ENCODE measurements at regions of chr16 and their contacts with region 1.

Region 1: DNA sequence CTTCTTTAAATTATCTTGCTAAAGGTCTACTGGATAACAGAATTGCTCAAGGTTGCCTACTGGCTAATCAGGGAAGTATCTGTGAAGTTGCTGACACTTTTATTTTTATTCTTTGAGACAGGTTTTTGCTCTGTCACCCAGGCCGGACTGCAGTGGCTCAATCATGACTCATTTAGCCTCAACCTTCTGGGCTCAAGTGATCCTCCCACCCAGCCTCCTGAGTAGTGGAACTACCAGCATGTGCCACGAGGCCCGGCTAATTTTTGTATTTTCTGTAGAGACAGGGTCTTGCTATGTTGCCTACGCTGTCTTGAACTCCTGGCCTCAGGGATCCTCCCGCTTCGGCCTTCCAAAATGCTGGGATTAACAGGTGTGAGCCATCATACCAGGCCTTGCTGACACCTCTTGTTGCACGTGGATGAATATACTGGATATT is 43.1 kb downstream of the GLG1 start:
- DNase-seq: peak in 1 of 2 donors; percentile 20
- ATAC-seq: peak; percentile 56 to 68 (median 68)
- H3K4me3 ChIP-seq: no peak overlapping the region
- H3K4me3 Mint-ChIP-seq: no peak overlapping the region
- H3K27ac ChIP-seq: no peak overlapping the region
- H3K27ac Mint-ChIP-seq: peak overlapping the region; percentile 77 to 85
- H3K4me1 ChIP-seq: peaks cover 28% of the 10 kb centered on the region
- H3K4me1 Mint-ChIP-seq: peaks cover 85 to 88% of the 10 kb centered on the region in 2 donors
- H3K27me3 ChIP-seq: no peaks in the 10 kb centered on the region
- H3K27me3 Mint-ChIP-seq: no peaks in the 10 kb centered on the region
- CTCF ChIP-seq: no peak

Region 2: DNA sequence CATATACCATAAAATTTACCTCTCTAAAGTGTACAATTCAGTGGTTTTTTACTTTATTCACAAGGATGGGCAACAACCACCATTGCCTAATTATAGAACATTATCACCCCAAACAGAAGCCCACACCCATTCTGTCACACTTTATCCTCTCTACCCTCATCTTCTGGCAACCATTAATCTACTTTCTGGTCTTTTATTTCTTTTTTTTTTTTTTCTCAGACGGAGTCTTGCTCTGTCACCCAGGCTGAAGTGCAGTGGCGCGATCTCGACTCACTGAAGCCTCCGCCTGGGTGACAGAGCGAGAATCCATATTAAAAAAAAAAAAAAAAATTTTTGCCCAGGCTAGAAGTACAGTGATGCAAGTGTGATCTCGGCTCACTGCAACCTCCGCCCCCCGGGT is 51.9 kb before region 1 on chr16:
- intact Hi-C with region 1: loop called (anchors 10 kb)
- DNase-seq: no peak
- ATAC-seq: peak in 2 of 3 donors; percentile 24 to 40
- H3K4me3 ChIP-seq: no peak overlapping the region
- H3K4me3 Mint-ChIP-seq: no peak overlapping the region
- H3K27ac ChIP-seq: no peak overlapping the region
- H3K27ac Mint-ChIP-seq: peak overlapping the region in 1 of 2 donors; percentile 20
- H3K4me1 ChIP-seq: no peaks in the 10 kb centered on the region
- H3K4me1 Mint-ChIP-seq: peaks cover 63 to 65% of the 10 kb centered on the region in 2 donors
- H3K27me3 ChIP-seq: no peaks in the 10 kb centered on the region
- H3K27me3 Mint-ChIP-seq: no peaks in the 10 kb centered on the region
- CTCF ChIP-seq: no peak

Region 3: GRCh38 chr16:74580833-74581232 is 17.0 kb after region 1 on chr16:
- intact Hi-C with region 1: no loop called
- DNase-seq: no peak
- ATAC-seq: peak in 2 of 3 donors; percentile 61 to 62
- H3K4me3 ChIP-seq: no peak overlapping the region
- H3K4me3 Mint-ChIP-seq: peak overlapping the region; percentile 25
- H3K27ac ChIP-seq: no peak overlapping the region
- H3K27ac Mint-ChIP-seq: peak overlapping the region; percentile 65 to 83
- H3K4me1 ChIP-seq: peaks cover 8% of the 10 kb centered on the region
- H3K4me1 Mint-ChIP-seq: peaks cover 57 to 79% of the 10 kb centered on the region in 2 donors
- H3K27me3 ChIP-seq: no peaks in the 10 kb centered on the region
- H3K27me3 Mint-ChIP-seq: no peaks in the 10 kb centered on the region
- CTCF ChIP-seq: no peak

Region 4: GRCh38 chr16:74606521-74607310 is 42.9 kb after region 1 on chr16 and contains the start of gene GLG1:
- intact Hi-C with region 1: loop called (anchors 1 kb)
- DNase-seq: peak; percentile 93 to 96
- ATAC-seq: peak; percentile 95 to 99 (median 96)
- H3K4me3 ChIP-seq: peak within 1 kb of the TSS; percentile 99
- H3K4me3 Mint-ChIP-seq: peak within 1 kb of the TSS; percentile 95
- H3K27ac ChIP-seq: peak within 1 kb of the TSS; percentile 95
- H3K27ac Mint-ChIP-seq: peak within 1 kb of the TSS; percentile 94 to 95
- H3K4me1 ChIP-seq: peaks cover 31% of the 10 kb centered on the region
- H3K4me1 Mint-ChIP-seq: peaks cover 40 to 48% of the 10 kb centered on the region in 2 donors
- H3K27me3 ChIP-seq: no peaks in the 10 kb centered on the region
- H3K27me3 Mint-ChIP-seq: no peaks in the 10 kb centered on the region
- CTCF ChIP-seq: no peak
- total RNA-seq, gene GLG1: 184 to 225 (median 188) TPM

Region 5: GRCh38 chr16:74793571-74793970 is 229.7 kb after region 1 on chr16:
- intact Hi-C with region 1: no loop called
- DNase-seq: no peak
- ATAC-seq: no peak
- H3K4me3 ChIP-seq: no peak overlapping the region
- H3K4me3 Mint-ChIP-seq: no peak overlapping the region
- H3K27ac ChIP-seq: no peak overlapping the region
- H3K27ac Mint-ChIP-seq: no peak overlapping the region
- H3K4me1 ChIP-seq: no peaks in the 10 kb centered on the region
- H3K4me1 Mint-ChIP-seq: no peaks in the 10 kb centered on the region
- H3K27me3 ChIP-seq: peaks cover 3% of the 10 kb centered on the region
- H3K27me3 Mint-ChIP-seq: peaks cover 22 to 39% of the 10 kb centered on the region in 2 donors
- CTCF ChIP-seq: no peak